Right lobe of liver (tissue), 6 donors: ENCODE measurements at regions of chr16 and their contacts with region 1.

Region 1: DNA sequence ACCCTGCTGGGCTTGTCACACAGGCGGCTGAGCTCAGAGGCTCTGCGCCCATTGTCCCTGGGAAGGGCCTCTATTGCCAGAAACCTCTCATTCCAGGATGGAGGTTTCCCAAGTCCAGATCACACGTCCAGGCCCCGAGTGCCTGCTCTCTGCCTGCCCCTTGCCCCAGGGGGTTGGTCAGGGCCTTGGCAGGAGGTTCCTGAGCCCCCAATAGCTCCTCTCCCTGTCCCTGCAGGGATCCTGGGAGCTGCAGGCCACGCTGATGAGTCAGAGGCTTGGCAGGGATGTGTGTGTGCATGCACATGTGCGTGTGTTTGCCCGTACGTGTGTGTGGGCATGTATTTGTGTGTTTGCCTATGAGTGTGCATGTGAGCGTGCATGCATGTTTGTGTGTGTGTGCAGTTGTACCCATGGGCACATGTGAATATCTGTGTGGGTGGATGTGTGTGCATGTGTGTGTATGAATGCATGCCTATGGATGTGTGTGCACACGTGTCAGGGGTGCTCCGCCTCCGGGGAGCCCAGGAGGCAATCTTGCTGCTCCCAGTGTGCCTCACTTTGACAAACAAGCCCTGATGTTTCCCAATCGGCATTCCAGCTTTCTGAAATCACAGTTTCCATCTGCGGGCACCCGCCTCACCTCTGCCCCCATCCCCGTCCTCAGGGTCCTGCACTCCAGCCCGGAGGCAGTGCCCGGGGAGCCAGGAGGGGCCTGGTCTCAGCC is 98.4 kb upstream of the GSE1 start:
- DNase-seq: peak; percentile 85 to 93 (median 90)
- ATAC-seq: peak; percentile 78 to 83 (median 82)
- H3K4me3 ChIP-seq: peak overlapping the region; percentile 14 to 42 (median 34)
- H3K27ac ChIP-seq: peak overlapping the region; percentile 86 to 98 (median 88)
- H3K4me1 ChIP-seq: peaks cover 0 to 27% (median 8%) of the 10 kb centered on the region in 4 donors
- H3K27me3 ChIP-seq: no peaks in the 10 kb centered on the region
- CTCF ChIP-seq: peak in 2 of 4 donors; percentile 15 to 29
- POLR2A ChIP-seq: peak; percentile 17

Region 2: DNA sequence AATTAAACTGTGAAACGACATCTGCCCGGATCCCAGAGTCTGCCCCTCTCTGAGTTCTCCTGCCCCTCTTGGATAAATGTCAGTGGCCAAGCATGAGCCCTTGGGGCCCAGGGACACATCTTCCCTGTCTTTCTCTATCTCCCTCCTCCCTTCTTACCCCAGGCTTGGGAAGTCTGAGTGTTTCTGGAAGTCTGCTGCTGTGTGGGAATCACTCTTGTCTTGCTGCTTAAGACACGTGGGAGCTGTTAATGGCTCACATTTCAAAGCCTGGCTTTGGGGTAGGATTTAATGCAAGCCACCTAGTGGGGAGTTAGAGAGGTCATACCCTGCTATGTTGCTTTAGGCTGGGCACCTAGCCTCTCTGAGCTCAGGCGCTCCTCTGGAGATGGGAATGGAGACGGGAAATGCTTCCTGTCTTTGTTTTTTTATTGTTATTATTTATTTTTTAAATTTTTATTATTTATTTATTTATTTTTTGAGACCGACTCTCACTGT is 184.0 kb before region 1 on chr16:
- intact Hi-C with region 1: no loop called
- DNase-seq: no peak
- ATAC-seq: peak; percentile 6 to 56 (median 16)
- H3K4me3 ChIP-seq: no peak overlapping the region
- H3K27ac ChIP-seq: no peak overlapping the region
- H3K4me1 ChIP-seq: peaks cover 0 to 17% (median 6%) of the 10 kb centered on the region in 4 donors
- H3K27me3 ChIP-seq: no peaks in the 10 kb centered on the region
- CTCF ChIP-seq: peak in 3 of 4 donors; percentile 31 to 35 (median 34)
- POLR2A ChIP-seq: no peak

Region 3: GRCh38 chr16:85564277-85565051 is 49.7 kb after region 1 on chr16:
- intact Hi-C with region 1: loop called in 1 of 2 experiments (anchors 5 kb)
- DNase-seq: peak; percentile 71 to 80 (median 79)
- ATAC-seq: peak; percentile 57 to 72 (median 64)
- H3K4me3 ChIP-seq: peak overlapping the region in 2 of 3 donors; percentile 36 to 40
- H3K27ac ChIP-seq: peak overlapping the region; percentile 53 to 89 (median 67)
- H3K4me1 ChIP-seq: peaks cover 0 to 75% (median 24%) of the 10 kb centered on the region in 4 donors
- H3K27me3 ChIP-seq: no peaks in the 10 kb centered on the region
- CTCF ChIP-seq: peak; percentile 75 to 88 (median 88)
- POLR2A ChIP-seq: no peak

Region 4: GRCh38 chr16:85799497-85800337 is 285.0 kb after region 1 on chr16 and contains the starts of genes COX4I1 and EMC8:
- intact Hi-C with region 1: no loop called
- DNase-seq: peak; percentile 97 to 98 (median 97)
- ATAC-seq: peak; percentile 96 to 98 (median 98)
- H3K4me3 ChIP-seq: peak within 1 kb of the TSS; percentile 96 to 100 (median 98)
- H3K27ac ChIP-seq: peak within 1 kb of the TSS; percentile 79 to 95 (median 93)
- H3K4me1 ChIP-seq: peaks cover 0 to 22% (median 11%) of the 10 kb centered on the region in 4 donors
- H3K27me3 ChIP-seq: no peaks in the 10 kb centered on the region
- CTCF ChIP-seq: no peak
- POLR2A ChIP-seq: peak; percentile 94
- total RNA-seq, gene COX4I1: 247 to 417 (median 303) TPM
- total RNA-seq, gene EMC8: 9.2 to 22.4 (median 12.1) TPM